Right lobe of liver (tissue), 6 donors: ENCODE measurements at regions of chrX and their contacts with region 1.

Region 1: DNA sequence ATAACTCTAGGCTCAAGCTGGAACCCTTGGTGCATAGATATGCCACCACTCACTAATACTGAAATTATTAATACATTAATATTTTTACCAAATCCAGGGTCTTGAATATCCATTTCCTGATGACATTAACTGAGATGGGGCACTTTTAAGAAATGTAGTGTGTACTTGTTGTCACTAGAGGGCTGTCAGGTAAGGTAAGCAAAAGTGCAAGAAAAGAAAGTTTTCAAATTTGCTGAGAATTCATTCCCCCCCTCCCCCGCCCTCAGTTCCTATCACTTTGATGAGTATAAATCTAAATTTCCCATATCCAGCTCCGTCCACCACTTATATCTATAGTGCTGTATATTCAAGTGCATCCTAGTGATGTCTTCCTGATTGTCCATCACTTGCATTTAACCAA is 20.5 kb upstream of the WDR44 start:
- DNase-seq: no peak
- ATAC-seq: peak in 1 of 4 donors; percentile 28
- H3K4me3 ChIP-seq: no peak overlapping the region
- H3K27ac ChIP-seq: no peak overlapping the region
- H3K4me1 ChIP-seq: no peaks in the 10 kb centered on the region
- H3K27me3 ChIP-seq: no peaks in the 10 kb centered on the region
- CTCF ChIP-seq: peak; percentile 25 to 39 (median 37)
- POLR2A ChIP-seq: no peak

Region 2: GRCh38 chrX:118595501-118596042 is 270.1 kb after region 1 on chrX:
- intact Hi-C with region 1: loop called in 1 of 2 experiments (anchors 10 kb)
- DNase-seq: no peak
- ATAC-seq: no peak
- H3K4me3 ChIP-seq: no peak overlapping the region
- H3K27ac ChIP-seq: no peak overlapping the region
- H3K4me1 ChIP-seq: no peaks in the 10 kb centered on the region
- H3K27me3 ChIP-seq: no peaks in the 10 kb centered on the region
- CTCF ChIP-seq: no peak
- POLR2A ChIP-seq: no peak